Sigmoid colon (tissue), 7 donors: ENCODE measurements at regions of chr6 and their contacts with region 1.

Region 1: GRCh38 chr6:17599885-17600526 is at the start of gene FAM8A1:
- DNase-seq: peak; percentile 98
- H3K4me3 ChIP-seq: peak within 1 kb of the TSS; percentile 82 to 100 (median 92)
- H3K27ac ChIP-seq: peak within 1 kb of the TSS; percentile 92 to 99 (median 96)
- H3K4me1 ChIP-seq: peaks cover 0 to 23% (median 17%) of the 10 kb centered on the region in 4 donors
- H3K27me3 ChIP-seq: no peaks in the 10 kb centered on the region
- CTCF ChIP-seq: peak; percentile 70 to 87 (median 78)
- EP300 ChIP-seq: peak in 1 of 4 donors; percentile 70
- POLR2A ChIP-seq: peak; percentile 62 to 82
- total RNA-seq, gene FAM8A1: 39.0 to 70.4 (median 51.8) TPM

Region 2: DNA sequence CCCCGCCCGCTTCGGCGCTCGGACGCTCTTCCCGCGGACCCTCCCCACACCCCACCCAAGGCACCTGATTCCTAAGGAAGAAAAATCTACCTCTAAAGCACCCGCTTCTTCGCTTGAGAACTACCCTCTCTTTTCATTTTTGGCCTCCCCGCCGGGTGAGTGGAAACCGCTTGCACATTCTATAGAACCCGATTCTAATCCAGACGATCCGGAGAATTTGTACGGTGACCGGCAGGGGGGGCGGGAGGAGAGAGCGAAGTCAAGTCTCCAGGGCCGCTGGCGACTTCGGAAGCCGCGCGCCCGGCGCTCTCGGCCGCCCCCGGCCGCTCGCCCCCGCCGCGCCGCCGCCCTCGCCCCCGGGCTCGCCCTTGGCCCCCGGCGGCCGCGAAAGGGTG is 318.9 kb before region 1 on chr6 and contains the start of gene RBM24:
- intact Hi-C with region 1: loop called (anchors 5 kb)
- DNase-seq: peak; percentile 88
- H3K4me3 ChIP-seq: peak within 1 kb of the TSS; percentile 80 to 93 (median 89)
- H3K27ac ChIP-seq: peak within 1 kb of the TSS; percentile 92 to 95 (median 94)
- H3K4me1 ChIP-seq: peaks cover 0 to 77% (median 37%) of the 10 kb centered on the region in 4 donors
- H3K27me3 ChIP-seq: no peaks in the 10 kb centered on the region
- CTCF ChIP-seq: peak in 3 of 4 experiments; percentile 20 to 26 (median 25)
- EP300 ChIP-seq: no peak
- POLR2A ChIP-seq: no peak
- total RNA-seq, gene RBM24: 8.3 to 34.1 (median 15.1) TPM

Region 3: DNA sequence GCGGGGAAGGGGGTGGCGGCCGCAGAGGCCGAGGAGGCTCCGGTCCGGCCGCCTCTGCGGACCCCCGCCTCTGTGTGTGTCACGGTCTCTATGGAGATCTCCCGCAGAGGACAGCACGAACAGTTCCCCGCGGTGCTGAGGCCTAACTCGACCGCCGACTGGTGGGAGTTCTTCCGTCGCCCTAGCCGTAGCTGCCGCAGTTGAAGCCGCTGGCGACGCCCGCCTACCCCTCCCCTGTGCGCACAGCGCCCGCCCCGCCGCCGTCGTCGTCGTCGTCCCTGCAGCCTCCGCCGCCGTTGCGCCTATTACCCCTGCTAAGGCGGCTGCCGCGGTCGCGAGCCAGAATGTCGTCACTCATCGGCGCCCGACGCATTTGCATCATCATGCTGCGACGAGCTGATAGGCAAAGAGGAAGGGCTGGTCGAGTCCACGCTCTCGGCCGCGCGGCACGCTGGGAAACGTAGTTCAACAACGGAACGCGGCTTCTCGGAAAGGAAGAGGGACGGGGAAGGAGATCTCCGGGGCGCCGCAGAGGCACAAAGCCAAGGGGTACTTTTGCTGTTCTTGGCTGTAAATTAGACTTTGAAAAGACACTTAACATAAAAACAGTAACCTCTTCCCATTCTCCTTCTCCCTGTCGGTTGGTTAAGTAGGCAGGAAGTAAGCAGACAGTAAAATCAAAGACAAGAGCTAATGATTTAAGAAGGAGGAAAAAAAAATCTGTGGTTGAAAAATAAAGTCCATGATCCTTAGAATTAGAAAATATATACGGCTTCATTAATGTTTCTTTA is 106.8 kb after region 1 on chr6 and contains the start of gene NUP153:
- intact Hi-C with region 1: loop called (anchors 2 kb)
- DNase-seq: peak; percentile 99
- H3K4me3 ChIP-seq: peak within 1 kb of the TSS; percentile 89 to 98 (median 89)
- H3K27ac ChIP-seq: peak within 1 kb of the TSS; percentile 99 to 100 (median 99)
- H3K4me1 ChIP-seq: peaks cover 0 to 38% (median 33%) of the 10 kb centered on the region in 4 donors
- H3K27me3 ChIP-seq: no peaks in the 10 kb centered on the region
- CTCF ChIP-seq: no peak
- EP300 ChIP-seq: peak in 2 of 4 donors; percentile 72 to 90
- POLR2A ChIP-seq: peak; percentile 84 to 92
- total RNA-seq, gene NUP153: 30.0 to 31.4 (median 30.6) TPM

Region 4: DNA sequence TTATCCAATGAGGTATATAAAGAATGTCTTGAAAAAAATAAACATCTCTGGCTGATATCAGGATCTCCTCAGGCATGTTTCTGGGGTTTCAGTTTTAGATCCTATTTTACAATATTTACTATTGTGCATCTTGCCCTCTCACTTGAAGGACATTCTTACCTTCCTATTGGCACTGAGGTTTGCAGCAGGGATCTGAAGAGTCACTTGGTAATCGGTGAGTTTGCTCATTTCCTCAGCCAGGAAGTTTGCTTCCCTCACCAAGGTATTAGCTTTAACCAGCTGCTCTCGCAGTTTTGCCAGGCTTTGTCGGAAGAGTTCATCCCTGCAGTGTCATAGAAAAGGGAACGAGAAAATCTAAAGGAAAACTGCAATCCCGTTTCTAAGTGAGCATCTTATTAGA is 208.6 kb after region 1 on chr6:
- intact Hi-C with region 1: loop called (anchors 2 kb)
- DNase-seq: no peak
- H3K4me3 ChIP-seq: no peak overlapping the region
- H3K27ac ChIP-seq: no peak overlapping the region
- H3K4me1 ChIP-seq: no peaks in the 10 kb centered on the region
- H3K27me3 ChIP-seq: no peaks in the 10 kb centered on the region
- CTCF ChIP-seq: no peak
- EP300 ChIP-seq: no peak
- POLR2A ChIP-seq: no peak

Region 5: DNA sequence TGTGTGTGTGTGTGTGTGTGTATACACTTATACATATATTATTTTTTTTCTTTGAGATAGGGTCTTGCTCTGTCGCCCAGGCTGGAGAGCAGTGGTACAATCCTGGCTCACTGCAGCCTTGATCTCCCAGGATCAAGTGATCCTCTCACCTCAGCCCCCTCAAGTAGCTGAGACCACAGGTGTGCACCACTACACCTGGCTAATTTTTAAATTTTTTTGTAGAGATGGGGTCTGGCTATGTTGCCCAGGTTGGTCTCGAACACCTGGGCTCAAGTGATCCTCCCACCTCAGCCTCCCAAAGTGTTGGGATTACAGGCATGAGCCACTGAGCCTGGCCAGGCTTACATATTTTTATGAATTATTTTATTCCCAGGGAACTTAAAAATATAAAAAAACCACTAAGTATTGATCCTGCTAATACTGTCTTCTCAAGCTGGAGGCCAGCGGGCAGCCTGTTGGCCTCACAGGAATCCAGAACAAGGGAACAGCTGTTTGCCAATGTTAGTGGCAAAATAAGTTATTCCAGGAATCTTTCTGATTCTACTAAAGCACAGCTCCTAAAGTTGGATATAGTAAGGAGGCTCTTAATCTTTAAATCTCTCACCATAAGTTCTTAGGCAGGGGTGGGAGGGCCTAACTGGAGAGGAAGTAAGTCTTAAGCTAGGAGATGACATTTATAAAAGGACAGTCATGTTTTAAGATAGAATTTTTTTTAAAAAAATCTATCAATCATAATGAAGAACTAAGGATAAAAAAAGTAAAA is 242.2 kb after region 1 on chr6:
- intact Hi-C with region 1: no loop called
- DNase-seq: no peak
- H3K4me3 ChIP-seq: no peak overlapping the region
- H3K27ac ChIP-seq: no peak overlapping the region
- H3K4me1 ChIP-seq: no peaks in the 10 kb centered on the region
- H3K27me3 ChIP-seq: no peaks in the 10 kb centered on the region
- CTCF ChIP-seq: no peak
- EP300 ChIP-seq: no peak
- POLR2A ChIP-seq: no peak